MCF 10A (cell line): ENCODE measurements at regions of chr18 and their contacts with region 1.

Region 1: GRCh38 chr18:11553098-11553940 is 56.1 kb upstream of the SLC35G4 start:
- DNase-seq: peak; percentile 65
- H3K4me3 Mint-ChIP-seq: no peak overlapping the region
- H3K27ac Mint-ChIP-seq: no peak overlapping the region
- H3K4me1 Mint-ChIP-seq: no peaks in the 10 kb centered on the region
- H3K27me3 Mint-ChIP-seq: peaks cover 24% of the 10 kb centered on the region
- CTCF ChIP-seq: peak; percentile 80

Region 2: GRCh38 chr18:10787293-10787901 is 765.9 kb before region 1 on chr18:
- CTCF ChIA-PET with region 1: interaction called, 3 read pairs
- POLR2A ChIA-PET with region 1: no interaction called
- intact Hi-C with region 1: loop called (anchors 5 kb)
- DNase-seq: peak; percentile 86
- H3K4me3 Mint-ChIP-seq: no peak overlapping the region
- H3K27ac Mint-ChIP-seq: no peak overlapping the region
- H3K4me1 Mint-ChIP-seq: no peaks in the 10 kb centered on the region
- H3K27me3 Mint-ChIP-seq: peaks cover 19% of the 10 kb centered on the region
- CTCF ChIP-seq: peak; percentile 82

Region 3: GRCh38 chr18:11425211-11425610 is 128.1 kb before region 1 on chr18:
- CTCF ChIA-PET with region 1: no interaction called
- POLR2A ChIA-PET with region 1: no interaction called
- intact Hi-C with region 1: no loop called
- DNase-seq: no peak
- H3K4me3 Mint-ChIP-seq: no peak overlapping the region
- H3K27ac Mint-ChIP-seq: no peak overlapping the region
- H3K4me1 Mint-ChIP-seq: no peaks in the 10 kb centered on the region
- H3K27me3 Mint-ChIP-seq: no peaks in the 10 kb centered on the region
- CTCF ChIP-seq: no peak

Region 4: DNA sequence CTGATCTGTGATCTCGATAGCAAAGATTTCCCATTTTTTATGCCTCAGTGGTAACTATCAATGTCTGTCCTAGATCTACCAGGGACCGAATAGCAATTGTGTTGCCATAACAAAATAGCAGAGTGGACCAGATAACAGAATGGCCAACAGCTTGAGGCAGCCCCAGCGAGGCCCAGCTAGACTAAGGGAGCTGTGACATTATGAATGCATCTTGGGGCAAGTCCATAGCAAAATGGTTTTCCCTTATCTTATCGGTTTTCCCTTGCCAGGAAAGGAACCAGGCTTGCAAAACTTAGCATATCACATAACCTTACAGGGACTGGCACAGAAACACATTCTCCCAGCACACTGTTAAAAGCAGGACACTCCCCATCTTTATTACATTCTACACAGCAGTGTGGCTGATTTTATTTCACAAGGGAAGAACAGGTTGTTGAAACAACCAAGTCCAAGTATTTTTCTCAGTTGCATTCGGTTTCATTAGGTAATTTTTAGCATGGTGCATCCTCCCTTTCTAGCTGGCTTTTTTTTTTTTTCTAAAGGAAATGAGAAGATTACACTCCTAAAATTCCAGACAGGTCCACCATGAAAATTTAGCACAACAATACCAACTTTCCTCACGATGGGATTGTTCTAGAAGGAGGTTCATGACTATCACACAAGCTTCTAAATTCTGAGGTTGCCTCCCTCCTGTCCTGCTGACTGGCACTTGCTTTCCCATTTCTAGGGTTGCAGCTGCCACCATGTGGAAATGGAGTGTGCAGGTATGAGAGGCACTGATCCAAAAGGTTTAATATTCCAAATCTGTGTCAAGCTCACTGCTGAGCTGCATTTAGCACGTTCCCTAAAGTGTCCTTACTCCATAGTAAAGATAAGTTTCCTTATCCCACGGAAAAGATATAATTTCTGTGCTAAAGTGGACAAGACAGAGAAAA is 41.0 kb before region 1 on chr18:
- CTCF ChIA-PET with region 1: interaction called, 5 read pairs
- POLR2A ChIA-PET with region 1: no interaction called
- intact Hi-C with region 1: loop called (anchors 2 kb)
- DNase-seq: peak; percentile 68
- H3K4me3 Mint-ChIP-seq: no peak overlapping the region
- H3K27ac Mint-ChIP-seq: no peak overlapping the region
- H3K4me1 Mint-ChIP-seq: no peaks in the 10 kb centered on the region
- H3K27me3 Mint-ChIP-seq: peaks cover 17% of the 10 kb centered on the region
- CTCF ChIP-seq: peak; percentile 74

Region 5: DNA sequence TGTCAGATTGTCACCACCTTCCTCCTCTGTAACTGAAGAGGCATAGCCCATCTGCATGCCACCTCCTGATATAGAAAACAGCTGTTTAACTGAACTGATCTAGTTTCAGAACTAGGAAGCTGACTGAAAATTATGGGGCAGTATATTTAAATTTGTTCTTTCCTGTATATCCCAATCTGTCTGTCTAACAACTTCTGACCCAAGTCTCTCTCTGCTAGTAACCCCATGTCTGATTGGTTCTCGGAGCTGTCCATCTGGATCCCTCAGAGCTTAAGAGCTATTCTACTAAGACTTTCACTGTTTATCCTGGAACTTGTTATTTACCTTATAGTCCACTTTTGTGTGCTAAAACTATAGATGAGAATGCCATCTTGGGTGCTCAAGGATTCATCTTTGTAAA is 12.1 kb before region 1 on chr18:
- CTCF ChIA-PET with region 1: interaction called, 11 read pairs
- POLR2A ChIA-PET with region 1: interaction called, 3 read pairs
- intact Hi-C with region 1: no loop called
- DNase-seq: no peak
- H3K4me3 Mint-ChIP-seq: no peak overlapping the region
- H3K27ac Mint-ChIP-seq: no peak overlapping the region
- H3K4me1 Mint-ChIP-seq: no peaks in the 10 kb centered on the region
- H3K27me3 Mint-ChIP-seq: no peaks in the 10 kb centered on the region
- CTCF ChIP-seq: no peak

Region 6: GRCh38 chr18:11570073-11570588 is 16.8 kb after region 1 on chr18:
- CTCF ChIA-PET with region 1: interaction called, 11 read pairs
- POLR2A ChIA-PET with region 1: no interaction called
- intact Hi-C with region 1: no loop called
- DNase-seq: no peak
- H3K4me3 Mint-ChIP-seq: no peak overlapping the region
- H3K27ac Mint-ChIP-seq: no peak overlapping the region
- H3K4me1 Mint-ChIP-seq: peaks cover 6% of the 10 kb centered on the region
- H3K27me3 Mint-ChIP-seq: peaks cover 59% of the 10 kb centered on the region
- CTCF ChIP-seq: no peak

Region 7: DNA sequence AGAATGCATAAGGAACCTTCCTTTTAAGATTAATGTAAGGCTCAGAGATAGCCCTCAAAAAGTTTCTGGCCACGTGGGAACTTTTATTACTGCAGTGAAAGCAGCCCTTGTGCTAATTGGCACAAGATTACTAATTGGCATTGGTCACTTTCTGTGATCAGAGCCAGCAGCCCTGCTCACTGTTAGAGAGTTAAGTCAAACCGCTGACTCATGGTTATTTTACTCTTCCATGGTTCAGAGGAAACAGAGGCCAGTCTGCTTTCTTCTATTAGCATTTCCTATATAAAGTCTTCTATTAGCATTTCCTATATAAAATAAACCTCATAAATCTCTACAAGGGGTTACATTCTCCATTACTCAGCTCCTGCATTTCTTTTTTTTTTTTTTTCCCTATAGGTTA is 54.6 kb after region 1 on chr18:
- CTCF ChIA-PET with region 1: no interaction called
- POLR2A ChIA-PET with region 1: no interaction called
- intact Hi-C with region 1: no loop called
- DNase-seq: no peak
- H3K4me3 Mint-ChIP-seq: no peak overlapping the region
- H3K27ac Mint-ChIP-seq: no peak overlapping the region
- H3K4me1 Mint-ChIP-seq: no peaks in the 10 kb centered on the region
- H3K27me3 Mint-ChIP-seq: peaks cover 42% of the 10 kb centered on the region
- CTCF ChIP-seq: no peak